AG04450 (cell line): ENCODE measurements at regions of chr10 and their contacts with region 1.

Region 1: DNA sequence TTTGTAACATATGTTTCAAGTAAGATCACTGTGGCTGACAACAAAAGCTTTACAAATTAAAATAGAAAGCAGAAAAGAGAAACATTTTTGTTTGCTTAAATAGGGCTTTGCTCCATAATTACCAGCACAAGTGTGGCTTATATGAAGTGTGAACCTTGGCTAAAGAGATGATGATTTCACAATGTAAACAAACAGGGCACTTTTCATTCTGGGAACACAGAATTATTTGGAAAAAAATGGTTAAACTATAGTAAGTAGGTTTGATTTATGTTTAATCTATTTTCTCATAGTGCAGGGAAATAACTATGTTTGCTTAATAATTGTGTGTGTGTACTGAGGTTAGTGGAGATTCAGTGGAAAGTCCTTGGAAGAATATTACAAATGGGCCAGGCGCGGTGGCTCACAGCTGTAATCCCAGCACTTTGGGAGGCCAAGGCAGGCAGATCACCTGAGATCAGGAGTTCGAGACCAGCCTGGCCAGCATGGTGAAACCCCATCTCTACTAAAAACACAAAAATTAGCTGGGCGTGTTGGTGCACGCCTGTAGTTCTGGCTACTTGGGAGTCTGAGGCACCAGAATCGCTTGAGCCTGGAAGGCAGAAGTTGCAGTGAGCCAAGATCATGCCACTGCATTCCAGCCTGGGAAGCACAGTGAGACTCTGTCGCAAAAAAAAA is 19.1 kb upstream of the OTUD1 start:
- DNase-seq: no peak
- H3K4me3 ChIP-seq: no peak overlapping the region
- H3K27ac ChIP-seq: no peak overlapping the region
- H3K27me3 ChIP-seq: peaks cover 2% of the 10 kb centered on the region
- CTCF ChIP-seq: no peak

Region 2: GRCh38 chr10:23461557-23461956 is 41.8 kb after region 1 on chr10:
- CTCF ChIA-PET with region 1: interaction called, 10 read pairs
- POLR2A ChIA-PET with region 1: no interaction called
- DNase-seq: no peak
- H3K4me3 ChIP-seq: no peak overlapping the region
- H3K27ac ChIP-seq: no peak overlapping the region
- H3K27me3 ChIP-seq: no peaks in the 10 kb centered on the region
- CTCF ChIP-seq: no peak